ENCODE measurements at regions of chr2 and their contacts with region 1.

Region 1: DNA sequence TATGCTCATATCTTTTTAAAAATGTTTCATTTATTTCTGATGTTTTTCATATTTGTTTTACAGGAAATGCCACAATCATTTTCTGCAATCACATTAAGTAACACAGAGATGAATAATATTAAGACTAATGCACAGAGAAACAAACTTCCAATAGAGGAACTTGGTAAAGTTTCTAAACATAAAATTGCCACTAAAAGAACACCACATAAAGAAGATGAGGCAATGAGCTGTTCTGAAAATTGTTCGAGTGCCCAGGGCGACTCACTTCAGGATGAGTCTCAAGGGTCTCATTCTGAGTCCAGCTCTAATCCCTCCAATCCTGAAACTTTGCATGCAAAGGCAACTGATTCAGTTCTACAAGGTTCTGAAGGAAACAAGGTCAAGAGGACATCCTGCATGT is 70.4 kb downstream of the APLF start:
- DNase-seq: no peak
- ATAC-seq: no peak
- H3K4me3 ChIP-seq: no peak overlapping the region
- H3K27ac ChIP-seq: no peak overlapping the region
- H3K4me1 ChIP-seq: peaks cover 0 to 5% (median 0%) of the 10 kb centered on the region in 9 donors
- H3K27me3 ChIP-seq: no peaks in the 10 kb centered on the region
- CTCF ChIP-seq: no peak

Region 2: DNA sequence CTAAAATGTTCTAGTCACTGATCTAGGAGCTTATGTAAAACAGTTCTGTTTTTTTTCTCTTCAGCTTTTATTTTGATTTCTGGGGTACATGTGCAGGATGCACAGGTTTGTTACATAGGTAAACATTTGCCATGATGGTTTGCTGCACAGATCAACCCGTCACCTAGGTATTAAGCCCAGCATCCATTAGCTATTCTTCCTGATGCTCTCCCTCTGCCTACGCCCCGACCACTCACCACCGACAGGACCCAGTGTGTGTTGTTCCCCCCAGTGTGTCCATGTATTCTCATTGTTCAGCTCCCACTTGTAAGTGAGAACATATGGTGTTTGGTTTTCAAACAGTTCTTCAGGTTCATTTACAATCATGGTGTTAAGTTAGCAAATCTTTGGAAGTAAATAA is 20.8 kb after region 1 on chr2:
- intact Hi-C with region 1: loop called in 1 of 10 experiments (anchors 2 kb)
- DNase-seq: no peak
- ATAC-seq: no peak
- H3K4me3 ChIP-seq: no peak overlapping the region
- H3K27ac ChIP-seq: no peak overlapping the region
- H3K4me1 ChIP-seq: no peaks in the 10 kb centered on the region
- H3K27me3 ChIP-seq: no peaks in the 10 kb centered on the region
- CTCF ChIP-seq: no peak

Region 3: DNA sequence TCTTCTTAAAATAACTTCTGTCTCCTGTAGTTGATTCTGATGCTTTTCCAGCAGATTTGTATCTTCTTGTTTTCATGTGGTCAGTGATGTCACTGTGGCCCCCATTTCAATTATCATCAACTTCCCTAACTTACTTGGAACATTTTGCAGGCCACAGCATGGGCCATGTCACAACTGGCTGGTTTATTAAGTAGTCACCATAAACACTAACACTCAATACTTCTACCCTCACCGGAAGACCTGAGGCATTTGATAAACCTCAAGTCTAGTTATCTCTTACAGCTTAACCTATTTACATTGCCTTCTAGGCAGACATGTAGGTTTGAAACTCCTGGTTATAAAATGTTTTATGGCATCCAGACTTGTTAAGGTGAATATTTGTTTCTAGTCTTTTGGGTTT is 68.1 kb after region 1 on chr2:
- intact Hi-C with region 1: no loop called
- DNase-seq: no peak
- ATAC-seq: no peak
- H3K4me3 ChIP-seq: no peak overlapping the region
- H3K27ac ChIP-seq: no peak overlapping the region
- H3K4me1 ChIP-seq: no peaks in the 10 kb centered on the region
- H3K27me3 ChIP-seq: no peaks in the 10 kb centered on the region
- CTCF ChIP-seq: no peak

Measured in heart right ventricle (tissue), 16 donors.